ENCODE measurements at regions of chr9 and their contacts with region 1.

Region 1: DNA sequence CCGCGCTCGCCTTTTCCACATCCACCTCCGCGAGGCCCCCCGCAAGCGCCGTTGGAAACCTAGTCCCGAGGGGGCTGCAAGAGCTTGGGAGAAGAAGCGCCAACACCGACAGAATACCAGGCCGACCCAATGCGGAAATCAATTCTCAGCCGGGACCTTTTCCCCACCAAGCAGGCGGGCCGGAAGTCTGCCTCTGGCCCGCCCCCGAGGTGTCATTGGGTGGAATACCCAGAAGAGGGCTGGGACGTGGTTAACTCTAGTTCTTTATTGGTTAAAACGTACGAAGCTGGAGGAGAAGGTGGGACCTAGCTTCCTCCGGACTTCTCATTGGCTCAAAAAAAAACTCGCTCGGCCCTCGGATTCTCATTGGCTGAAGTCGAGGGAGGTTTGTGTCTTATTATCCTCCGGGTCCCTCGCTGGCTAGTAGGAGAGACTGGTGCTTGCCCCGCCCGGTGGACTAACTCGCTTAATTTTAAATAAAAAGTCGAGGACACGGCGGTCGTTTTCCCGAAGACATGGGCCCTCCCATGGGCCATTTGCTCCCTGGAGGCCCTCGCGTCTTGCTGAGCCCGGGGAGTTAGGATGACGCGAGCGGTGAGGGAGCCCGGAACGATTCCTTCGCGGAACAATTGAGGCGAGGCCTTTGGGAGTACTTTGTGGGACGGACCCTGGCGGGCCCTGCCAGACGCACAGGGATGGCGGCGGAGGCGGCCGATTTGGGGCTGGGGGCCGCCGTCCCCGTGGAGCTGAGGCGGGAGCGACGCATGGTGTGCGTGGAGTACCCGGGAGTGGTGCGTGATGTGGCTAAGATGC is at the start of gene GTF3C5:
- DNase-seq: peak; percentile 91
- H3K4me3 ChIP-seq: peak within 1 kb of the TSS; percentile 98
- H3K27ac ChIP-seq: peak within 1 kb of the TSS; percentile 97
- H3K4me1 ChIP-seq: peaks cover 44% of the 10 kb centered on the region
- H3K27me3 ChIP-seq: no peaks in the 10 kb centered on the region
- CTCF ChIP-seq: peak; percentile 23
- total RNA-seq, gene GTF3C5: 36.0 TPM

Region 2: DNA sequence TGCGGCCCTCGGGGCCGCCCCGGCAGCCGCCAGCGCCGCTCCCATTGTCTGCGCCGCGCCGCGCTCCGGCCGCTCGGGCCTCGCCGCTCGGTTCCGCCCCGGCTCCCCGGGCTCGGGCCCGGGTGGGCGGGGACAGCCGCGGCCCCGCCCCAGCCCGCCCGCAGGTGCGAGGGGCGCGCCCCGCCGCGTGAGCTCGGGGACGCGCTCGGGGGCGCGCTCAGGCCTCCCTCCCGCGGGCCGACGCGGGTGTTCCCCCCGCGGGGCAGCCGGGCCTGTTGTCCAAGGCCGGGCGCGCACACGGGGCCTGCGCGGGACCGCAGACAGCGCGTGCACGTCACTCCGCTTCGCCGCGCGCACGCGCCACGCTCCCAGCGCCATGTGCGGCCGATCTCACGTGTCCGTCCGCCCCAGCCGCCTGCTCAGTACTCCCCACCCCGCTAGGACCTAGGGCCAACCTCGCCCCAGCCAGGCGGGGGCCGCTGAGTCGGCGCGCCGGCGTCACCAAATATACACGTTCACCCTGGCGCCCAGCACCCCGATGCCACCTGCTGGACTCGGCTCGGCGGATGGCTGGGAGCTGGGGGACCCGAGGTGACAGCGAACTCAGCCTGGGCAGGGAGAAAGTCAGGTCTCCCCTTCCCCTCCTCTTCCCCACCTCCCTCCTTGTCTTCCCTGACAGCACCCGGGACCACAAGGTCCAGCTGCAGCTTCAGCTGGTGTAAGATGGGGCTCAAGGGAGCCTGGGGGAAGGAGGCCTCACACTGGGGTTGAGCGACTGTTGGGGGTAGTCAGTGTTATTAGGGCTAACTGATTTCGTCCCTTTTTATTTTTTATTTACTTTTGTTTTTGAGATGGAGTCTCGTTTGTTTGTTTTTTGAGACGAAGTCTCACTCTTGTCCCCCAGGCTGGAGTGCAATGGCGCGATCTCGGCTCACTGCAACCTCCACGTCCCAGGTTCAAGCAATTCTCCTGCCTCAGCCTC is 118.9 kb after region 1 on chr9:
- intact Hi-C with region 1: loop called (anchors 10 kb)
- DNase-seq: peak; percentile 89
- H3K4me3 ChIP-seq: peak overlapping the region; percentile 82
- H3K27ac ChIP-seq: peak overlapping the region; percentile 87
- H3K4me1 ChIP-seq: peaks cover 42% of the 10 kb centered on the region
- H3K27me3 ChIP-seq: no peaks in the 10 kb centered on the region
- CTCF ChIP-seq: peak; percentile 47